ENCODE measurements at regions of chr2 and their contacts with region 1.

Region 1: GRCh38 chr2:225002039-225002655 is 40.1 kb downstream of the DOCK10 start:
- DNase-seq: peak in 8 of 9 donors; percentile 48 to 75 (median 70)
- ATAC-seq: peak; percentile 93
- H3K4me3 ChIP-seq: no peak overlapping the region
- H3K4me3 Mint-ChIP-seq: peak overlapping the region in 9 of 10 donors; percentile 9 to 70 (median 40)
- H3K27ac ChIP-seq: peak overlapping the region; percentile 23
- H3K27ac Mint-ChIP-seq: peak overlapping the region; percentile 64 to 90 (median 87)
- H3K4me1 ChIP-seq: peaks cover 27 to 43% of the 10 kb centered on the region in 2 donors
- H3K4me1 Mint-ChIP-seq: peaks cover 51 to 97% (median 90%) of the 10 kb centered on the region in 7 donors
- H3K27me3 ChIP-seq: no peaks in the 10 kb centered on the region
- H3K27me3 Mint-ChIP-seq: no peaks in the 10 kb centered on the region

Region 2: DNA sequence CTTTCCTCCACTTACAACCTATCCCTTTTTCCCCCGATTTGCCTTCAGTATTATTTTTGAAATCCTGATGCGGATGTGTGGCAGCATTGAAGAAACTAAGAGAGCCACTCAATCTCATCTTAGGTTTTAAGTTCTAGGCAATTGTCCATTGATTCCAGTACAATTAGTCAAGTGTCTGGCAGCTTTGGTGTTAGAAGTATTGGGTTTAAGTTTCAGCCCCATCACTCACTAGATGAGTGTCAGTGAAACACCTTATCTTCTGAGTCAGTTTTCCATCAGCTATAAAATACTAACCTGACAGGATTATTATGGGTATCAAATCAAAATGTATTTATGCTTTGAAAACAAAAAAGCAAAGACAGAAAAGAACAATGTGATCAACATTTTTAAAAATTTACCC is 400.2 kb before region 1 on chr2:
- CTCF ChIA-PET with region 1: no interaction called
- POLR2A ChIA-PET with region 1: no interaction called
- intact Hi-C with region 1: no loop called
- DNase-seq: no peak
- ATAC-seq: no peak
- H3K4me3 ChIP-seq: no peak overlapping the region
- H3K4me3 Mint-ChIP-seq: peak overlapping the region in 3 of 10 donors; percentile 80 to 91 (median 85)
- H3K27ac ChIP-seq: no peak overlapping the region
- H3K27ac Mint-ChIP-seq: no peak overlapping the region
- H3K4me1 ChIP-seq: no peaks in the 10 kb centered on the region
- H3K4me1 Mint-ChIP-seq: peaks cover 0 to 15% (median 10%) of the 10 kb centered on the region in 7 donors
- H3K27me3 ChIP-seq: no peaks in the 10 kb centered on the region
- H3K27me3 Mint-ChIP-seq: peaks cover 0 to 13% (median 7%) of the 10 kb centered on the region in 5 donors

Region 3: DNA sequence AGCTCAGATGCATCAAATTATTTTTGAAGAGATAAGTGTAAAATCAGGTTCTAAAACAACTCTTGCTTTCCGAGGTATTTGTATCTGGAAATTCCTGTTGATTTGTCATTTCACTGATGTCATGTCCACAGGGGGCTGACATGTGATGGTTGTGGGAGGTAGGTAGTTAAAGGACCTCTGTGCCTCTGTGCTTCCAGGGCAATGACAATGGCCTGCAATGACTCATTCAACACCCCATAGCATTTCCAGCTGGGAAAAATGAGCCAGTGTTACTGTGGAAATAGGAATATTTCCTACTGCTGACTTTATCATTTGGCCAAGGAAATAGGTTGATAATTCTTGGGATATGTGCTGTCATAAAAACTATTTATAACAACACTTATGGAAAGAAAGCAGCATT is 199.7 kb before region 1 on chr2:
- CTCF ChIA-PET with region 1: no interaction called
- POLR2A ChIA-PET with region 1: no interaction called
- intact Hi-C with region 1: loop called (anchors 1 to 10 kb)
- DNase-seq: no peak
- ATAC-seq: no peak
- H3K4me3 ChIP-seq: no peak overlapping the region
- H3K4me3 Mint-ChIP-seq: no peak overlapping the region
- H3K27ac ChIP-seq: no peak overlapping the region
- H3K27ac Mint-ChIP-seq: peak overlapping the region in 4 of 9 donors; percentile 12 to 79 (median 26)
- H3K4me1 ChIP-seq: no peaks in the 10 kb centered on the region
- H3K4me1 Mint-ChIP-seq: peaks cover 0 to 4% (median 0%) of the 10 kb centered on the region in 7 donors
- H3K27me3 ChIP-seq: no peaks in the 10 kb centered on the region
- H3K27me3 Mint-ChIP-seq: no peaks in the 10 kb centered on the region

Region 4: GRCh38 chr2:224938651-224939182 is 63.4 kb before region 1 on chr2:
- CTCF ChIA-PET with region 1: interaction called, 19 read pairs
- POLR2A ChIA-PET with region 1: interaction called, 4 read pairs
- intact Hi-C with region 1: no loop called
- DNase-seq: peak in 1 of 9 donors; percentile 56
- ATAC-seq: peak; percentile 56
- H3K4me3 ChIP-seq: no peak overlapping the region
- H3K4me3 Mint-ChIP-seq: peak overlapping the region; percentile 46 to 81 (median 68)
- H3K27ac ChIP-seq: peak overlapping the region; percentile 62
- H3K27ac Mint-ChIP-seq: peak overlapping the region; percentile 78 to 92 (median 86)
- H3K4me1 ChIP-seq: peaks cover 44 to 62% of the 10 kb centered on the region in 2 donors
- H3K4me1 Mint-ChIP-seq: peaks cover 60 to 100% (median 84%) of the 10 kb centered on the region in 7 donors
- H3K27me3 ChIP-seq: no peaks in the 10 kb centered on the region
- H3K27me3 Mint-ChIP-seq: no peaks in the 10 kb centered on the region

Region 5: GRCh38 chr2:225041851-225042799 is 40.0 kb after region 1 on chr2 and contains the start of gene DOCK10:
- CTCF ChIA-PET with region 1: interaction called, 8 read pairs
- POLR2A ChIA-PET with region 1: interaction called, 3 read pairs
- intact Hi-C with region 1: loop called (anchors 1 to 2 kb)
- DNase-seq: peak; percentile 38 to 60 (median 57)
- ATAC-seq: peak; percentile 67
- H3K4me3 ChIP-seq: peak within 1 kb of the TSS; percentile 85
- H3K4me3 Mint-ChIP-seq: peak within 1 kb of the TSS; percentile 93 to 100 (median 98)
- H3K27ac ChIP-seq: peak within 1 kb of the TSS; percentile 96
- H3K27ac Mint-ChIP-seq: peak within 1 kb of the TSS; percentile 92 to 99 (median 96)
- H3K4me1 ChIP-seq: peaks cover 31 to 41% of the 10 kb centered on the region in 2 donors
- H3K4me1 Mint-ChIP-seq: peaks cover 40 to 61% (median 55%) of the 10 kb centered on the region in 7 donors
- H3K27me3 ChIP-seq: no peaks in the 10 kb centered on the region
- H3K27me3 Mint-ChIP-seq: peaks cover 0 to 29% (median 0%) of the 10 kb centered on the region in 5 donors
- total RNA-seq, gene DOCK10: 200 to 275 (median 231) TPM

Region 6: GRCh38 chr2:225064362-225064761 is 62.2 kb after region 1 on chr2:
- CTCF ChIA-PET with region 1: no interaction called
- POLR2A ChIA-PET with region 1: no interaction called
- intact Hi-C with region 1: no loop called
- DNase-seq: no peak
- ATAC-seq: peak; percentile 24
- H3K4me3 ChIP-seq: no peak overlapping the region
- H3K4me3 Mint-ChIP-seq: peak overlapping the region; percentile 6 to 62 (median 40)
- H3K27ac ChIP-seq: no peak overlapping the region
- H3K27ac Mint-ChIP-seq: peak overlapping the region in 8 of 9 donors; percentile 26 to 80 (median 61)
- H3K4me1 ChIP-seq: peaks cover 10 to 14% of the 10 kb centered on the region in 2 donors
- H3K4me1 Mint-ChIP-seq: peaks cover 11 to 42% (median 35%) of the 10 kb centered on the region in 7 donors
- H3K27me3 ChIP-seq: no peaks in the 10 kb centered on the region
- H3K27me3 Mint-ChIP-seq: no peaks in the 10 kb centered on the region

Region 7: GRCh38 chr2:225083276-225083675 is 81.1 kb after region 1 on chr2:
- CTCF ChIA-PET with region 1: no interaction called
- POLR2A ChIA-PET with region 1: no interaction called
- intact Hi-C with region 1: no loop called
- DNase-seq: no peak
- ATAC-seq: no peak
- H3K4me3 ChIP-seq: no peak overlapping the region
- H3K4me3 Mint-ChIP-seq: no peak overlapping the region
- H3K27ac ChIP-seq: no peak overlapping the region
- H3K27ac Mint-ChIP-seq: peak overlapping the region in 2 of 9 donors; percentile 10 to 54
- H3K4me1 ChIP-seq: peaks cover 0 to 4% of the 10 kb centered on the region in 2 donors
- H3K4me1 Mint-ChIP-seq: peaks cover 5 to 14% (median 12%) of the 10 kb centered on the region in 7 donors
- H3K27me3 ChIP-seq: no peaks in the 10 kb centered on the region
- H3K27me3 Mint-ChIP-seq: peaks cover 0 to 12% (median 0%) of the 10 kb centered on the region in 5 donors

Region 8: GRCh38 chr2:225177098-225177497 is 175.0 kb after region 1 on chr2:
- CTCF ChIA-PET with region 1: no interaction called
- POLR2A ChIA-PET with region 1: no interaction called
- intact Hi-C with region 1: loop called in 1 of 2 experiments (anchors 5 kb)
- DNase-seq: no peak
- ATAC-seq: no peak
- H3K4me3 ChIP-seq: no peak overlapping the region
- H3K4me3 Mint-ChIP-seq: no peak overlapping the region
- H3K27ac ChIP-seq: no peak overlapping the region
- H3K27ac Mint-ChIP-seq: no peak overlapping the region
- H3K4me1 ChIP-seq: no peaks in the 10 kb centered on the region
- H3K4me1 Mint-ChIP-seq: peaks cover 0 to 9% (median 0%) of the 10 kb centered on the region in 7 donors
- H3K27me3 ChIP-seq: no peaks in the 10 kb centered on the region
- H3K27me3 Mint-ChIP-seq: peaks cover 0 to 4% (median 4%) of the 10 kb centered on the region in 5 donors

Measured in naive thymus-derived CD4-positive, alpha-beta T cell (primary cell).